ENCODE measurements at regions of chr5 and their contacts with region 1.

Region 1: GRCh38 chr5:149114403-149115312 is 26.6 kb upstream of the ABLIM3 start:
- DNase-seq: peak in 9 of 10 donors; percentile 56 to 83 (median 64)
- H3K4me3 ChIP-seq: no peak overlapping the region
- H3K27ac ChIP-seq: peak overlapping the region in 34 of 59 donors; percentile 8 to 75 (median 54)
- H3K27me3 ChIP-seq: no peaks in the 10 kb centered on the region
- CTCF ChIP-seq: peak in 55 of 56 donors; percentile 54 to 93 (median 80)

Region 2: GRCh38 chr5:148998174-148998797 is 116.4 kb before region 1 on chr5:
- intact Hi-C with region 1: loop called (anchors 10 kb)
- DNase-seq: peak in 1 of 10 donors; percentile 42
- H3K4me3 ChIP-seq: no peak overlapping the region
- H3K27ac ChIP-seq: peak overlapping the region in 9 of 59 donors; percentile 7 to 47 (median 21)
- H3K27me3 ChIP-seq: peaks cover 0 to 4% (median 0%) of the 10 kb centered on the region in 45 donors
- CTCF ChIP-seq: peak; percentile 44 to 81 (median 69)

Region 3: GRCh38 chr5:149074106-149074505 is 40.6 kb before region 1 on chr5:
- intact Hi-C with region 1: loop called in 1 of 2 experiments (anchors 5 kb)
- DNase-seq: no peak
- H3K4me3 ChIP-seq: no peak overlapping the region
- H3K27ac ChIP-seq: no peak overlapping the region
- H3K27me3 ChIP-seq: no peaks in the 10 kb centered on the region
- CTCF ChIP-seq: no peak

Measured in dorsolateral prefrontal cortex (tissue), 120 donors.